ENCODE measurements at regions of chr9 and their contacts with region 1.

Region 1: GRCh38 chr9:37963936-37964739 is 60.2 kb upstream of the SLC25A51 start:
- DNase-seq: peak; percentile 74 to 86 (median 82)
- ATAC-seq: peak; percentile 53 to 71 (median 62)
- H3K4me3 ChIP-seq: peak overlapping the region in 1 of 4 donors; percentile 6
- H3K27ac ChIP-seq: peak overlapping the region; percentile 86 to 90 (median 88)
- H3K4me1 ChIP-seq: peaks cover 58 to 63% (median 60%) of the 10 kb centered on the region in 3 donors
- H3K27me3 ChIP-seq: no peaks in the 10 kb centered on the region
- CTCF ChIP-seq: no peak

Region 2: GRCh38 chr9:37639109-37639762 is 324.9 kb before region 1 on chr9:
- intact Hi-C with region 1: no loop called
- DNase-seq: no peak
- ATAC-seq: no peak
- H3K4me3 ChIP-seq: no peak overlapping the region
- H3K27ac ChIP-seq: no peak overlapping the region
- H3K4me1 ChIP-seq: no peaks in the 10 kb centered on the region
- H3K27me3 ChIP-seq: no peaks in the 10 kb centered on the region
- CTCF ChIP-seq: no peak

Region 3: GRCh38 chr9:37787059-37787458 is 177.1 kb before region 1 on chr9:
- intact Hi-C with region 1: no loop called
- DNase-seq: peak in 2 of 6 donors; percentile 25 to 69
- ATAC-seq: no peak
- H3K4me3 ChIP-seq: no peak overlapping the region
- H3K27ac ChIP-seq: no peak overlapping the region
- H3K4me1 ChIP-seq: peaks cover 0 to 18% (median 0%) of the 10 kb centered on the region in 3 donors
- H3K27me3 ChIP-seq: no peaks in the 10 kb centered on the region
- CTCF ChIP-seq: no peak

Region 4: DNA sequence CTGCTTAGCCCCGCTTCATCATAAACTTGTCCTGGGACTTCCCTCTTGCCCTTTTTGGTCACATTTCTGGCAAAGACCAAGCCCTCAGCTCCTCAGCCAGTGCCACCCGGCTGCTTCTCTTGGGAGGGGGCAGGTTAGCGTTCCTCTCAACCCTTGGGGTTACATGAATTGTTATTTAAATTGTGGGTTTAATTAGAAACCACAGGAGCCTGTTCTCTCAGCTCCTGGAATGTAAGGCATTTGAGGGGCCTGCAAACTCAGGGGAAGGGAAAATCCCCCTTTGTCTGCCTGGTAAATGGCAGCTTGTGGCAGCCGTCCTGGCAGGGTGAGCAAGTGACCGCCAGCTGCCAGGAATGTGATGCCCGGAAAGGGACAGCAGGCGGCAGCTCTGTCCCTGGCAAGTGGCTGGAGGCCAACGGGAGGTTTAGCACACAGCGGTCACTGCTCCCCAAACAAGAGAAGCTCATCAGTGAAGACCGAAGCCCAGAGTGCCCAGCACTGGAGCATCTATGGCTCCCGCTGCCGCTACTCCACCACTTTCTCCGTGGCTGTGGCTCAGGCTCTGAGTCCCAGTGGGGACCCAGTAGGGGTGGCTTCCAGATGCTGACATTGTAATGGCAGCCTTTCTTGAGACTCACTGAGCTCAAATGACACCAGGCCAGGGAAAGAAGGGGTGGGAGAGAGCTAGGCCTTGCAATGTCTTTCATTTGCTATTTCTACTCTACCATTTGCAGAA is 53.2 kb after region 1 on chr9:
- intact Hi-C with region 1: loop called in 1 of 3 experiments (anchors 10 kb)
- DNase-seq: peak; percentile 62 to 86 (median 77)
- ATAC-seq: peak; percentile 51 to 81 (median 80)
- H3K4me3 ChIP-seq: no peak overlapping the region
- H3K27ac ChIP-seq: peak overlapping the region in 3 of 4 donors; percentile 27 to 70 (median 53)
- H3K4me1 ChIP-seq: peaks cover 18 to 41% (median 39%) of the 10 kb centered on the region in 3 donors
- H3K27me3 ChIP-seq: no peaks in the 10 kb centered on the region
- CTCF ChIP-seq: peak in 2 of 4 donors; percentile 14 to 16

Region 5: GRCh38 chr9:38518826-38519225 is 554.7 kb after region 1 on chr9:
- intact Hi-C with region 1: no loop called
- DNase-seq: no peak
- ATAC-seq: no peak
- H3K4me3 ChIP-seq: no peak overlapping the region
- H3K27ac ChIP-seq: no peak overlapping the region
- H3K4me1 ChIP-seq: no peaks in the 10 kb centered on the region
- H3K27me3 ChIP-seq: no peaks in the 10 kb centered on the region
- CTCF ChIP-seq: no peak

Measured in pancreas (tissue), 10 donors.